Natural killer cell (primary cell): ENCODE measurements at regions of chr14 and their contacts with region 1.

Region 1: GRCh38 chr14:74084277-74085046 is at the starts of genes ALDH6A1 and LIN52:
- DNase-seq: peak; percentile 100
- ATAC-seq: peak; percentile 85 to 95 (median 86)
- H3K4me3 ChIP-seq: peak within 1 kb of the TSS; percentile 72
- H3K4me3 Mint-ChIP-seq: peak within 1 kb of the TSS; percentile 99
- H3K27ac ChIP-seq: peak within 1 kb of the TSS; percentile 69
- H3K27ac Mint-ChIP-seq: peak within 1 kb of the TSS; percentile 92 to 96
- H3K4me1 ChIP-seq: peaks cover 11% of the 10 kb centered on the region
- H3K4me1 Mint-ChIP-seq: peaks cover 39 to 50% of the 10 kb centered on the region in 2 donors
- H3K27me3 ChIP-seq: no peaks in the 10 kb centered on the region
- H3K27me3 Mint-ChIP-seq: no peaks in the 10 kb centered on the region
- CTCF ChIP-seq: no peak
- total RNA-seq, gene ALDH6A1: 8.5 to 9.6 (median 9.5) TPM
- total RNA-seq, gene LIN52: 10.6 to 15.0 (median 12.8) TPM

Region 2: DNA sequence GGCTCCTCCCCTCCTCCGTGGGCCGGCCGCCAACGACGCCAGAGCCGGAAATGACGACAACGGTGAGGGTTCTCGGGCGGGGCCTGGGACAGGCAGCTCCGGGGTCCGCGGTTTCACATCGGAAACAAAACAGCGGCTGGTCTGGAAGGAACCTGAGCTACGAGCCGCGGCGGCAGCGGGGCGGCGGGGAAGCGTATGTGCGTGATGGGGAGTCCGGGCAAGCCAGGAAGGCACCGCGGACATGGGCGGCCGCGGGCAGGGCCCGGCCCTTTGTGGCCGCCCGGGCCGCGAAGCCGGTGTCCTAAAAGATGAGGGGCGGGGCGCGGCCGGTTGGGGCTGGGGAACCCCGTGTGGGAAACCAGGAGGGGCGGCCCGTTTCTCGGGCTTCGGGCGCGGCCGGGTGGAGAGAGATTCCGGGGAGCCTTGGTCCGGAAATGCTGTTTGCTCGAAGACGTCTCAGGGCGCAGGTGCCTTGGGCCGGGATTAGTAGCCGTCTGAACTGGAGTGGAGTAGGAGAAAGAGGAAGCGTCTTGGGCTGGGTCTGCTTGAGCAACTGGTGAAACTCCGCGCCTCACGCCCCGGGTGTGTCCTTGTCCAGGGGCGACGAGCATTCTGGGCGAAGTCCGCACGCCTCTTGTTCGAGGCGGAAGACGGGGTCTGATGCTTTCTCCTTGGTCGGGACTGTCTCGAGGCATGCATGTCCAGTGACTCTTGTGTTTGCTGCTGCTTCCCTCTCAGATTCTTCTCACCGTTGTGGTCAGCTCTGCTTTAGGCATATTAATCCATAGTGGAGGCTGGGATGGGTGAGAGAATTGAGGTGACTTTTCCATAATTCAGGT is 947.9 kb before region 1 on chr14 and contains the start of gene PSEN1:
- intact Hi-C with region 1: loop called (anchors 5 kb)
- DNase-seq: peak; percentile 99
- ATAC-seq: peak; percentile 93 to 96 (median 94)
- H3K4me3 ChIP-seq: peak within 1 kb of the TSS; percentile 85
- H3K4me3 Mint-ChIP-seq: peak within 1 kb of the TSS; percentile 97
- H3K27ac ChIP-seq: peak within 1 kb of the TSS; percentile 96
- H3K27ac Mint-ChIP-seq: peak within 1 kb of the TSS; percentile 96 to 100
- H3K4me1 ChIP-seq: peaks cover 17% of the 10 kb centered on the region
- H3K4me1 Mint-ChIP-seq: peaks cover 24 to 29% of the 10 kb centered on the region in 2 donors
- H3K27me3 ChIP-seq: no peaks in the 10 kb centered on the region
- H3K27me3 Mint-ChIP-seq: no peaks in the 10 kb centered on the region
- CTCF ChIP-seq: no peak
- total RNA-seq, gene PSEN1: 47.1 to 62.6 (median 55.2) TPM